ENCODE measurements at regions of chr6 and their contacts with region 1.

Region 1: DNA sequence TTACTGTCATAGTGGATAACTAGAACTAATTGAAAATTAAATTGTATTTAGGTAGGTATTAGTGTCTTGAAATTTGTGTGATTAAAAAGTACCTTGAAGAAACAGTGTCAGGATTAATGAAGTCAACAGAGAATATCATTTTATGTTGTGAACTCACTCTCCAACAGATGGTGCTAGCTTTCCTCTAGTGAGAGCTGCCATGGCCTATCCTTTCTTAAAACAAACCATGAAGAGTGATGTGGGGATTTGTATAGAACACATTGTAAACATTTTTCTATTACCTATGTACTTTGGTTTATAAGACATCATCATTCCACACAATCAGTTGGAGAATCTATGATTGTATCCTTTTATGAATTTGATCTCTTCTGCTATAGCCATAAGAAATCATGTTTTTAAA is 4.8 kb upstream of the SRSF12 start:
- DNase-seq: peak; percentile 53
- ATAC-seq: peak; percentile 67
- H3K4me3 ChIP-seq: no peak overlapping the region
- H3K27ac ChIP-seq: no peak overlapping the region
- H3K4me1 ChIP-seq: peaks cover 25% of the 10 kb centered on the region
- H3K27me3 ChIP-seq: no peaks in the 10 kb centered on the region
- CTCF ChIP-seq: peak; percentile 78
- EP300 ChIP-seq: no peak
- POLR2A ChIP-seq: no peak
- RAD21 ChIP-seq: peak; percentile 54; the same call in 1 of the 2 replicates

Region 2: GRCh38 chr6:88165844-88166492 is 956.7 kb before region 1 on chr6 and contains the start of gene CNR1:
- CTCF ChIA-PET with region 1: no interaction called
- POLR2A ChIA-PET with region 1: no interaction called
- in situ Hi-C with region 1: no loop called
- intact Hi-C with region 1: no loop called
- DNase-seq: no peak
- ATAC-seq: peak; percentile 89
- H3K4me3 ChIP-seq: peak within 1 kb of the TSS; percentile 37 to 64 (median 45); a peak in 5 of 6 replicates
- H3K27ac ChIP-seq: no peak within 1 kb of the TSS
- H3K4me1 ChIP-seq: peaks cover 4% of the 10 kb centered on the region; the same call in 1 of the 2 replicates
- H3K27me3 ChIP-seq: peaks cover 8 to 54% of the 10 kb centered on the region in 2 experiments
- CTCF ChIP-seq: peak; percentile 22; the same call in 1 of the 2 replicates
- EP300 ChIP-seq: no peak
- POLR2A ChIP-seq: no peak
- RAD21 ChIP-seq: 0 out of 2 replicates have a peak, but pooled peaks have one; percentile 45
- total RNA-seq, gene CNR1: not detected in 2 replicates

Region 3: DNA sequence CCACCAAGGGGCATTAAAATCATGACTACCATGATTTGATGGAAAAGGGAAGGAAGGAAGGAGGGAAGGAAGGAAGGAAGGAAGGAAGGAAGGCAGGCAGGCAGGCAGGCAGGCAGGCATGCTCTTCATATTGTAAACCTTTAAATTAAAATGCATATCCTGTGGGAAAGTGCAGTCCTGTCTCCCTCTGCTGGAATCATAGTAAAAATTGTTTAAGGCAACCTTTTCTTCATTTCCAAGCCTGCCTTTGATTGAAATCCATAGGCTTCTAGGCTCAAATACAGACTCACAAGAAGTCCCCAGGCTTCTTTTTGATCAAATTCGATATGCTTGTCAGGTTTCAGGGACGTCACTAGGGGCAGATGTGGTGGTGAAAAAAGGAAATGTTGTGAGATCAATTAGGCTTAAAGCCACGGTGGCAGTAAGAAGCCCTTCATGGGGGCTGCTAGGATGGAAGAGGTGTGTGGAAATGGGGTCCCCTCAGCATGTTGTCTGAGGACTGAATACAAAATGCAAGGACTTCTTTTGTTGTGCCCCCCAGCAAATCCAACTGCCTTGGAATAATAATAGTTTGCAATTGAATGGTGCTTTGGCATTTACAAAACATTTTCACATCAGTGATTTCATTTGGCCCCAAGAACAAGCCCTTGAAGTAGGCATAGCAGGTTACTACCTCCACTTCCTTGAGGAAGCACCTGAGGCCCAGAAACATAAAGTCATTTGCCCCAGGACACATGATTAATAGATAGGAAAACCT is 120.1 kb after region 1 on chr6:
- CTCF ChIA-PET with region 1: interaction called, 32 read pairs
- POLR2A ChIA-PET with region 1: no interaction called
- in situ Hi-C with region 1: loop called (anchors 5 kb)
- intact Hi-C with region 1: loop called (anchors 1 kb)
- DNase-seq: peak; percentile 44
- ATAC-seq: peak; percentile 75
- H3K4me3 ChIP-seq: no peak overlapping the region
- H3K27ac ChIP-seq: no peak overlapping the region
- H3K4me1 ChIP-seq: no peaks in the 10 kb centered on the region
- H3K27me3 ChIP-seq: no peaks in the 10 kb centered on the region
- CTCF ChIP-seq: peak; percentile 77
- EP300 ChIP-seq: no peak
- POLR2A ChIP-seq: no peak
- RAD21 ChIP-seq: peak; percentile 68